Activated CD4-positive, alpha-beta memory T cell treated with anti-CD3 and anti-CD28 coated beads for 36 hours (primary cell): ENCODE measurements at regions of chr12 and their contacts with region 1.

Region 1: DNA sequence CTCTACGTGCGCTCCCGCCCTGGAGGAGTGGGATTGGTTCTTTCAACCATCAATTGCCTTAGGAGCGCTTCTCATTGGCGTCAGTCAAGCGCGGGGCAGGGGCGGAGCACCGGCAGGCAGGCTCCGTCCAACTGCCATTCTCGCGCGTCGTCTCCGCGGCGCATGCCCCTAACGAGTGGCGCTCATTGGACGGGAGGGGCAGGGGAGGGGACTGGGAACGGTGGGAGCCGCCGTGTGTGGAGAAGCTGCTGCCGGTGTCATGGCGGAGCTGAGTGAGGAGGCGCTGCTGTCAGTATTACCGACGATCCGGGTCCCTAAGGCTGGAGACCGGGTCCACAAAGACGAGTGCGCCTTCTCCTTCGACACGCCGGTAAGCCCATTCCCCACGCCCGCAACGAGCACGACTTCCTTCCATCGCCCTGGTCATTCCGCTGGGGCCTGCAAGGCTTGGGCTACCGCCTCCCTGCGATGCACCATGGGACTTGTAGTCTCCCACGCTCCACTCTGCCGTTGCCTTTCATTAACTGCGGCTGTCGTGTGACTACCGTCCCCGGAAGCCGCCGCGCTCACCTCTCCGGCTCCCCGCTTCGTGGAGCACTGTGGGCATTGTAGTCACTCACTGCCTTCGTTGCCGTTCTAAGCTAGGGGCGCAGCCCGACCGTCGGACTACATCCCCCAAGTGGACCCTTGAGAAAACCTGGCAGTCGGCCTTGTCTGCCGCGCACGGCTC is at the start of gene USP5:
- DNase-seq: peak; percentile 99
- H3K4me3 Mint-ChIP-seq: peak within 1 kb of the TSS; percentile 95
- H3K27ac Mint-ChIP-seq: peak within 1 kb of the TSS; percentile 98
- H3K4me1 Mint-ChIP-seq: peaks cover 29% of the 10 kb centered on the region
- H3K27me3 Mint-ChIP-seq: no peaks in the 10 kb centered on the region
- total RNA-seq, gene USP5: 125 to 130 TPM

Region 2: DNA sequence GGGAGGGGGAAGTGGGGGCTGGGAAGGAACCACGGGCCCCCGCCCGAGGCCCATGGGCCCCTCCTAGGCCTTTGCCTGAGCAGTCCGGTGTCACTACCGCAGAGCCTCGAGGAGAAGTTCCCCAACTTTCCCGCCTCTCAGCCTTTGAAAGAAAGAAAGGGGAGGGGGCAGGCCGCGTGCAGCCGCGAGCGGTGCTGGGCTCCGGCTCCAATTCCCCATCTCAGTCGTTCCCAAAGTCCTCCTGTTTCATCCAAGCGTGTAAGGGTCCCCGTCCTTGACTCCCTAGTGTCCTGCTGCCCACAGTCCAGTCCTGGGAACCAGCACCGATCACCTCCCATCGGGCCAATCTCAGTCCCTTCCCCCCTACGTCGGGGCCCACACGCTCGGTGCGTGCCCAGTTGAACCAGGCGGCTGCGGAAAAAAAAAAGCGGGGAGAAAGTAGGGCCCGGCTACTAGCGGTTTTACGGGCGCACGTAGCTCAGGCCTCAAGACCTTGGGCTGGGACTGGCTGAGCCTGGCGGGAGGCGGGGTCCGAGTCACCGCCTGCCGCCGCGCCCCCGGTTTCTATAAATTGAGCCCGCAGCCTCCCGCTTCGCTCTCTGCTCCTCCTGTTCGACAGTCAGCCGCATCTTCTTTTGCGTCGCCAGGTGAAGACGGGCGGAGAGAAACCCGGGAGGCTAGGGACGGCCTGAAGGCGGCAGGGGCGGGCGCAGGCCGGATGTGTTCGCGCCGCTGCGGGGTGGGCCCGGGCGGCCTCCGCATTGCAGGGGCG is 318.0 kb before region 1 on chr12 and contains the start of gene GAPDH:
- CTCF ChIA-PET with region 1: no interaction called
- POLR2A ChIA-PET with region 1: interaction called, 7 read pairs
- intact Hi-C with region 1: loop called (anchors 2 kb)
- DNase-seq: peak; percentile 93
- H3K4me3 Mint-ChIP-seq: peak within 1 kb of the TSS; percentile 96
- H3K27ac Mint-ChIP-seq: peak within 1 kb of the TSS; percentile 100
- H3K4me1 Mint-ChIP-seq: peaks cover 44% of the 10 kb centered on the region
- H3K27me3 Mint-ChIP-seq: no peaks in the 10 kb centered on the region
- total RNA-seq, gene GAPDH: 5,823 to 5,836 TPM

Region 3: DNA sequence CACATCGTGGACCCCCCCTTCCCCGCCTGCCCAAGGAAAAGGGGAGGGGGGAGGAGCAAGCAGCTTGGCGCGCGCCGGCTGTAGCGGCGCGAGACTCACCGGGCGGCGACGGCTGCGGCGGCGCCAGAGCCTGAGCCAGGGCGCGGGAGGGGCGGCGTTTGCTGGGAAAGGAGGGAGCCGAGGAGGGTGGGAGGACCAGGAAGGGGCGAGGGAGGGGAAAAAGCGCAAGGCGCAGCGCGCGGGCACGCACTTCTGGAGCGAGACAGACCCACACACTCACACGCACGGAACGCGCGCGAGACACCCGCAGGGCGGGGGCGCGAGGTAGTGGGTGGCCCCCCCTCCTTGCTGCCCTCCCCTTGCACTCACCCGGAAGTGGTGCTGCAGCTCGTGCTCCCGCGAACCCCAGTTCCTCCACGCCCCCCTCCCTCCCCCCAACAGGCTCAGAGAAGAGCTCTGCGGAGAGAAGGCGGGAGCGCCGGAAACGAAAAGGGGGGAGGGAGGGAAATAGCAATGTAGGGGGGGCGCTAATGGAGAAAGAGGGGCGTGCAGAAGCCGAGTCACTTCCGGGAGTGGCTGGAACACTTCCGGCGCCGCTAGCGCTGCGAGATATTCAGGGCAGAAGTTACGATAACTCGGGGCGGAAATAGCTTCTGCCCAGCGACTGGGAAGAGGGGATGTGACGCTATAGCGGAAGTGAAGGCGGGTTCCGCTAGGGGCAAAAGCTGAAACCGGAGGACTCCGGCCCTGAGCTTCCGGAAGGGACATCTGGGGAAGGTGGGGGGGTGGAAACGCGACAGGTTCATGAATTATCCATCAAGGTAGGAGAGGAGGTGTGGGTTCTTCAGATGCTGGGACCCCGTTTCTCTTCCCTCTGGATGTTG is 162.8 kb before region 1 on chr12 and contains the start of gene ZNF384:
- CTCF ChIA-PET with region 1: interaction called, 4 read pairs
- POLR2A ChIA-PET with region 1: interaction called, 19 read pairs
- intact Hi-C with region 1: loop called (anchors 1 kb)
- DNase-seq: peak; percentile 97
- H3K4me3 Mint-ChIP-seq: peak within 1 kb of the TSS; percentile 92
- H3K27ac Mint-ChIP-seq: peak within 1 kb of the TSS; percentile 97
- H3K4me1 Mint-ChIP-seq: peaks cover 44% of the 10 kb centered on the region
- H3K27me3 Mint-ChIP-seq: no peaks in the 10 kb centered on the region
- total RNA-seq, gene ZNF384: 55.3 to 56.3 TPM

Region 4: DNA sequence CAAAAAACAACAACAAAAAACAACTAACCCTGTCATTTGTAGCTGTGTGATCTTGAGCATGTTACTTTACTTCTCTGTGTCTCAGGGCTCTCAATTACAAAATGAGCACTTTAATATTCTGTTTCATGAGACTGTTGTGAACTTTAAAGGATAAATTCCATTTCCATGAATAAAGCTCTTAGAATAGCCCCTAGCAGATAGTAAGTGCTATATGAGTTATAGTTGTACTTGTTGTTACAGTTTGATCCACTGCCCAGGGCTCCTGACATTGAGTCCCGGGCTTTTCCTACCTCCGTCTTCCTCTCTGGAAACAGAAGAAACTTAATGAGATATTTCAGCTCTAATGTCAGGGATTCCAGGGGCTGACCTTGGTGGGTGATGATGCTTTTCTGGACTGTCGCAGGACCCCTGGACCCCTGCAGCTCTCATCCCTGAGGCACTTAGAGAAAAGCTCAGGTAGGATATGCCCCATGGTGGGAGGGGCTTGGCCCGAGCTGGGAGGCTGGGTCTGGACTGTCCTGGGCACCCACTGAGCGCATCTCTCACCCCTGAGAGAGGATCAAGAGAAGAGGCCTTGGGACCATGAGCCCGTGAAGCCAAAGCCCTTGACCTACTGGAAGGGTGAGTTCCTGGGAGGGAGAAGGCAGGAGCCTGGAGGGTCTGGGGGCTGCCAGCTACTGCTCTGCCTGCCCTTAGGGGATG is 18.7 kb before region 1 on chr12:
- CTCF ChIA-PET with region 1: interaction called, 41 read pairs
- POLR2A ChIA-PET with region 1: interaction called, 16 read pairs
- intact Hi-C with region 1: no loop called
- DNase-seq: no peak
- H3K4me3 Mint-ChIP-seq: no peak overlapping the region
- H3K27ac Mint-ChIP-seq: no peak overlapping the region
- H3K4me1 Mint-ChIP-seq: peaks cover 10% of the 10 kb centered on the region
- H3K27me3 Mint-ChIP-seq: peaks cover 7% of the 10 kb centered on the region

Region 5: GRCh38 chr12:6873094-6874014 is 21.3 kb after region 1 on chr12 and contains the start of gene SPSB2:
- CTCF ChIA-PET with region 1: interaction called, 74 read pairs
- POLR2A ChIA-PET with region 1: interaction called, 94 read pairs
- intact Hi-C with region 1: loop called (anchors 1 kb)
- DNase-seq: peak; percentile 99
- H3K4me3 Mint-ChIP-seq: peak within 1 kb of the TSS; percentile 87
- H3K27ac Mint-ChIP-seq: peak within 1 kb of the TSS; percentile 89
- H3K4me1 Mint-ChIP-seq: peaks cover 51% of the 10 kb centered on the region
- H3K27me3 Mint-ChIP-seq: no peaks in the 10 kb centered on the region
- total RNA-seq, gene SPSB2: 3.8 to 4.7 TPM

Region 6: DNA sequence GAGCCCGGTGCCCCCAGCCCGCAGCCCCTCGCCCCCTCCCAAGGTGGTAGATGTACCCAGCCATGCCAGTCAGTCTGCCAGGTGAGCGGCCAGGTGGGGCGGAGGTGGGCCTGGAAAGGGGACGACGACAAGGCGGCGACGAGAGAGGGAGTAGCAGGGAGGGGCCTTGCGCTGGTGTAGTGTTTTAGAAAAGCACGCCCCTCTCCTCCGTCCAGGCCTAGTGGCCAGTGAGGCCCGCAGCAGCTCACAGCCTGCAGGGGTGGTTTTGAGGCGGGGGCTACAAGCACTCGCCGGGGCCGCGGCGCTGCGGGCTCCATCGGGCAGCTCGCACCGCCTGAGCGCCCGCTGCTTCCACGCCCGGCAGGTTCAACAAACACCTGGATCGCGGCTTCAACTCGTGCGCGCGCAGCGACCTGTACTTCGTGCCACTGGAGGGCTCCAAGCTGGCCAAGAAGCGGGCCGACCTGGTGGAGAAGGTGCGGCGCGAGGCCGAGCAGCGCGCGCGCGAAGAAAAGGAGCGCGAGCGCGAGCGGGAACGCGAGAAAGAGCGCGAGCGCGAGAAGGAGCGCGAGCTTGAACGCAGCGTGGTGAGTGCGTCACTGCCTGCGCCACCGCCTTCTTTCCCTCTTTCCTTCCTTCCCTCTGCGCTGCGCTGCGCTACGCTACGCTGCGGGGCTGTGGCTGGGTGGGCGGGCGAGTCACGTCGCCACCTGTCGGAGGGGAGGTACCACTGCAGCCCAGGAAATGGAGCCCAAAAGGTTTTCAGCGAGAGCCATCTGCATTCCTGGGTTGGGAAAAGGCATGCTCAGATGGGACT is 85.6 kb after region 1 on chr12:
- CTCF ChIA-PET with region 1: interaction called, 3 read pairs
- POLR2A ChIA-PET with region 1: interaction called, 22 read pairs
- intact Hi-C with region 1: no loop called
- DNase-seq: peak; percentile 96
- H3K4me3 Mint-ChIP-seq: peak overlapping the region; percentile 76
- H3K27ac Mint-ChIP-seq: peak overlapping the region; percentile 94
- H3K4me1 Mint-ChIP-seq: peaks cover 44% of the 10 kb centered on the region
- H3K27me3 Mint-ChIP-seq: no peaks in the 10 kb centered on the region

Region 7: DNA sequence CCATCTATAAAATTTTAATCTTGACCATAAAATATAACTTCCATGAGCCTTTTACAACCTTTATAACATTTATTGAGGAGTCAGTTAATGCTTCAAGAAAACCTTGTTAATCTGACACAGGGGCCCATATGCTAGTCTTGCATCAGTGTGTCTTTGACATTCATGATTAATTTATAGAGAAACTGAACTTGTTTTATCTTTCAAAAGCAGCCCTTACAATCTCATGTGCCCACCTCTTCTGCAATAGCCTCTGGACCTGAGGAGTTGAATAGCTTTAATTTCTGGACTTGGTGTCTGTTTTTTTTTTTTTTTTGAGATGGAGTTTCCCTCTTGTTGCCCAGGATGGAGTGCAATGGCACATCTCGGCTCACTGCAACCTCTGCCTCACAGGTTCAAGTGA is 174.8 kb after region 1 on chr12:
- CTCF ChIA-PET with region 1: no interaction called
- POLR2A ChIA-PET with region 1: no interaction called
- intact Hi-C with region 1: no loop called
- DNase-seq: no peak
- H3K4me3 Mint-ChIP-seq: no peak overlapping the region
- H3K27ac Mint-ChIP-seq: no peak overlapping the region
- H3K4me1 Mint-ChIP-seq: no peaks in the 10 kb centered on the region
- H3K27me3 Mint-ChIP-seq: peaks cover 1% of the 10 kb centered on the region

Region 8: GRCh38 chr12:7229741-7230140 is 377.7 kb after region 1 on chr12:
- CTCF ChIA-PET with region 1: no interaction called
- POLR2A ChIA-PET with region 1: no interaction called
- intact Hi-C with region 1: no loop called
- DNase-seq: no peak
- H3K4me3 Mint-ChIP-seq: no peak overlapping the region
- H3K27ac Mint-ChIP-seq: no peak overlapping the region
- H3K4me1 Mint-ChIP-seq: no peaks in the 10 kb centered on the region
- H3K27me3 Mint-ChIP-seq: peaks cover 16% of the 10 kb centered on the region